ENCODE measurements at regions of chr6 and their contacts with region 1.

Region 1: GRCh38 chr6:8589941-8590729 is 154.8 kb upstream of the SLC35B3 start:
- DNase-seq: peak; percentile 47
- ATAC-seq: peak; percentile 100
- H3K4me3 Mint-ChIP-seq: no peak overlapping the region
- H3K27ac Mint-ChIP-seq: no peak overlapping the region
- H3K4me1 Mint-ChIP-seq: peaks cover 8% of the 10 kb centered on the region
- H3K27me3 Mint-ChIP-seq: no peaks in the 10 kb centered on the region
- CTCF ChIP-seq: no peak

Region 2: GRCh38 chr6:8608737-8609136 is 18.6 kb after region 1 on chr6:
- CTCF ChIA-PET with region 1: interaction called, 11 read pairs
- POLR2A ChIA-PET with region 1: no interaction called
- DNase-seq: peak; percentile 18
- ATAC-seq: peak; percentile 89
- H3K4me3 Mint-ChIP-seq: no peak overlapping the region
- H3K27ac Mint-ChIP-seq: no peak overlapping the region
- H3K4me1 Mint-ChIP-seq: no peaks in the 10 kb centered on the region
- H3K27me3 Mint-ChIP-seq: no peaks in the 10 kb centered on the region; the same call in 1 of the 2 replicates
- CTCF ChIP-seq: no peak